Vagina (tissue), 2 donors: ENCODE measurements at regions of chr11 and their contacts with region 1.

Region 1: DNA sequence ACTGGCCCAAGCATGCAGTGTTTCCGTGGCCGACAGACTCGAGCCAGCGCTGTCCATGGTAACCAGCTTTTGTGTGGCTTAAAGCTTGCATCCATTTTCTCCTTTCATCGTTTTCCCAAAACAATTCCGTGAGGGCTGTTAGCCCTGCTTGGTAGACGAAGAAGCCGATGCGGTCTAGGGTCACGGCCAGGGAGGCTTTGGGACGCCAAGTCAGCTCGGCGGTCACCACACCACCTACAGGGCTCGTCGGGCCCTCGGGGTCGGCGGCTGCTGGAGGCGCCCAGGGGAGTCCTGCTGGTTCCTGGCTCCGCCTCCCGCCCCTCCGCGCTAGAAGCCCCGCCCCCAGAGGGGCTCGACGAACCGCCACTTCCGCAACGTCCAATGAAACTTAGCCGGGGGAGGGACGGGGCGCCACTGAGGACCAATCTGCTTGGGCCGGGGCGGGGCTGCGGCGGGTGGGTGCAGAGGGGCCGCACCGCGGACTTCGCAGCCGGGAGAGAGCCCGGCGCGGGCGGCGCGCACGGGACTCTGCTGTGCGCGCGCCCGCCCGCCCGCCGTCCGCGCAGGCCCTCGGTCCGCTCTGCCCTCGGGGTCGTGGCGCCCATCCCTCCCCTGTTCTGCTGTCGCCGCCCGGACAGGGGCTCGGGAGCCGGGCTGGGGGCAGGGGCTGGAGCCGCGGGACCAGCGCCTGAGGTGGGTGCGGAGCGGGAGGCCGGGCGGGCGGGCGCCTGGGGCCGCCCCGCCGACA is at the start of gene TIGD3:
- DNase-seq: peak in 1 of 2 donors; percentile 97
- H3K4me3 ChIP-seq: peak within 1 kb of the TSS; percentile 71 to 72
- H3K27ac ChIP-seq: peak within 1 kb of the TSS; percentile 68
- H3K4me1 ChIP-seq: peaks cover 26% of the 10 kb centered on the region
- H3K27me3 ChIP-seq: no peaks in the 10 kb centered on the region
- CTCF ChIP-seq: no peak
- POLR2A ChIP-seq: peak in 1 of 2 donors; percentile 68
- total RNA-seq, gene TIGD3: not detected

Region 2: GRCh38 chr11:65382033-65382807 is 27.8 kb after region 1 on chr11 and contains the start of gene SLC25A45:
- intact Hi-C with region 1: loop called (anchors 2 kb)
- DNase-seq: peak in 1 of 2 donors; percentile 99
- H3K4me3 ChIP-seq: peak within 1 kb of the TSS; percentile 42 to 51
- H3K27ac ChIP-seq: peak within 1 kb of the TSS; percentile 98
- H3K4me1 ChIP-seq: peaks cover 67% of the 10 kb centered on the region
- H3K27me3 ChIP-seq: no peaks in the 10 kb centered on the region
- CTCF ChIP-seq: peak; percentile 92 to 95 (median 92)
- POLR2A ChIP-seq: peak in 1 of 2 donors; percentile 29
- total RNA-seq, gene SLC25A45: 2.2 TPM